Pancreas (tissue), 10 donors: ENCODE measurements at regions of chr6 and their contacts with region 1.

Region 1: DNA sequence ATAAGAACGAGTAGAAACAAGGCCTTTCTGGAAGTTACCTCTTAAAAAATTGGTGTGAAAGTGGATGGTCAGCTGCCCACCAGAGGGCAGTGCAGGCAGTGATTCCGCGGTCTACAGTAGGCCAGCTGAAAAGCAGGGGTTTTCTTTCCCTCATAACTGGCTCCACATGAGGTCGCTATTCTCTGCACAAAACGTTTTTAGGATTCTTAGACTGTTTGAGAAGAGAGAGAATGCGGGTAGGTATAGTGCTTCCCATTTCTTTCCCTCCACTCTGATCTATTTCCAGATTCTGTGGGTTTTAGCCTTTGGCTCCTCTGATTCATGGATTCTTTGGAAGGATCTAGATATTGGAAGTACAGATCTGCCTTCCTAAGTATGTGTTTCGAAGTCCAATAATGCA is 14.2 kb downstream of the FIG4 start:
- DNase-seq: peak; percentile 68 to 86 (median 75)
- ATAC-seq: peak; percentile 96 to 99 (median 98)
- H3K4me3 ChIP-seq: no peak overlapping the region
- H3K27ac ChIP-seq: no peak overlapping the region
- H3K4me1 ChIP-seq: peaks cover 0 to 8% (median 0%) of the 10 kb centered on the region in 3 donors
- H3K27me3 ChIP-seq: no peaks in the 10 kb centered on the region
- CTCF ChIP-seq: peak; percentile 89 to 98 (median 94)

Region 2: DNA sequence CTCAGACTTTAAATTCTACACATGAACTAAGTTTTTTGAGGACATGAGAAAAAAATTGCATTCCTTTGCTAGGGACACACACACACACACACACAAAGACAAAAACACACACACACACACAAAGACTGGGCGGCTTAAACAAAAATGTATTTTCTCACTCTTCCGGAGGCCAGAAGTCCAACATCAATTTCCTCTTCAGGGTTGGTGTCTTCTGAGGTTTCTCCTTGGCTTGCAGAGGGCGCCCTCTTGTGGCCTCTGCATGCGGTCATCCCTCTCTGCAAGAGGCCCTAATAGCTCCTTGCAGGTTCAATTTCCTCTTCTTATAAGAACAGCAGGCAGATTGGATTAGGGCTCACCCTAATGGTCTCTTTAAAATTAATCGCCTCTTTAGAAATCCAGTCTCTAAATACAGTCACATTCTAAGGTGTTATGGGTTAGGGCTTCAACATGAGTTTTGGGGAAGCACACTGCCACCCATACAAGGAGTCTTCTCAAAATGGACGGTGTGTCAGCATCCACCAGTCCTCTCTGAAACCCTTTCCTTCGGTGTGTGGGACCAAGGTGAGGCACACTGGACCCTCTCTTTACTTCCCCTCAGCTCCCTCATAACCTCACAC is 334.2 kb after region 1 on chr6:
- intact Hi-C with region 1: loop called in 2 of 3 experiments (anchors 5 kb)
- DNase-seq: peak; percentile 72 to 90 (median 84)
- ATAC-seq: peak; percentile 96 to 98 (median 97)
- H3K4me3 ChIP-seq: peak overlapping the region in 2 of 4 donors; percentile 17 to 31
- H3K27ac ChIP-seq: peak overlapping the region in 3 of 4 donors; percentile 2 to 52 (median 23)
- H3K4me1 ChIP-seq: no peaks in the 10 kb centered on the region
- H3K27me3 ChIP-seq: no peaks in the 10 kb centered on the region
- CTCF ChIP-seq: peak; percentile 76 to 88 (median 86)

Region 3: GRCh38 chr6:110053395-110054240 is 348.4 kb after region 1 on chr6:
- intact Hi-C with region 1: loop called in 1 of 3 experiments (anchors 5 kb)
- DNase-seq: peak in 3 of 6 donors; percentile 12 to 29 (median 27)
- ATAC-seq: peak; percentile 66 to 91 (median 84)
- H3K4me3 ChIP-seq: no peak overlapping the region
- H3K27ac ChIP-seq: no peak overlapping the region
- H3K4me1 ChIP-seq: no peaks in the 10 kb centered on the region
- H3K27me3 ChIP-seq: no peaks in the 10 kb centered on the region
- CTCF ChIP-seq: peak in 3 of 4 donors; percentile 57 to 63 (median 61)

Region 4: DNA sequence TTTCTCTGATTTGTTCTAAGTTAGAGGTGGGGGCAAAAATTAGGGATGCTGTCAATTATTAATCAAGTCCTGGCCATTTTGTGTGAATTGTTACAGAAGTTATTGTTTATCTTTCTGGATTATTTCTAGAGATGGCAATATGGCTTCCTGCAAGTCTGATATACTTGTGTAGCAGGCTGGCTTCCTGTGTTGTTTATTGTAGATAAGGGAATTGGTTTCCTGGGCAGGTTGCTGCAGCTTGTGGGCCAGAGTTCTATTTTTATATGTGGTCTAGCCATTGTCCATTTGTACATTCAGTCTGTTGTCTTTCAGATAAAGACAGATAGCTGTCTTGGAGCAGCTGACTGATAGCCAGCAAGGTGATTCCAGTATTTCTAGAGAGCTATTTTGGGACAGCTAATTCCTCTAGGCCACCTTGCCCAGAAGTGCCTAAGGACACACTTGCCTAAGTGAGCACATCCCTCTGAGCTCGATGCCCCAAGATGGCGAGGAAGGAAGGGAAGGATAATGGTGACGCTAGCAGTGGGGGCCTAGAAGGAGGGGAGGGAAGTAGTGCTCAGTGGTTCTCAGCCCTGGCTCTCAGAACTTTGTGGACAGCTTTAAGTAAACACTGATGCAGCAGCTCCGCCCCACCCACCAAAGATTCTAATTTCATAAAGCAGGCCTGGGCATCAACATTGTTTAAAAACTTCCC is 684.6 kb after region 1 on chr6:
- intact Hi-C with region 1: loop called in 2 of 3 experiments (anchors 10 kb)
- DNase-seq: peak in 1 of 6 donors; percentile 11
- ATAC-seq: peak; percentile 65 to 87 (median 75)
- H3K4me3 ChIP-seq: no peak overlapping the region
- H3K27ac ChIP-seq: no peak overlapping the region
- H3K4me1 ChIP-seq: peaks cover 0 to 18% (median 0%) of the 10 kb centered on the region in 3 donors
- H3K27me3 ChIP-seq: no peaks in the 10 kb centered on the region
- CTCF ChIP-seq: no peak

Region 5: GRCh38 chr6:110398778-110399177 is 693.5 kb after region 1 on chr6:
- intact Hi-C with region 1: loop called in 1 of 3 experiments (anchors 10 kb)
- DNase-seq: no peak
- ATAC-seq: no peak
- H3K4me3 ChIP-seq: no peak overlapping the region
- H3K27ac ChIP-seq: no peak overlapping the region
- H3K4me1 ChIP-seq: no peaks in the 10 kb centered on the region
- H3K27me3 ChIP-seq: no peaks in the 10 kb centered on the region
- CTCF ChIP-seq: no peak